PC-9 (cell line): ENCODE measurements at regions of chr4 and their contacts with region 1.

Region 1: GRCh38 chr4:147480891-147481576 is at the start of gene EDNRA:
- DNase-seq: peak in 1 of 2 experiments; percentile 16
- H3K4me3 ChIP-seq: peak within 1 kb of the TSS; percentile 46
- H3K27ac ChIP-seq: no peak within 1 kb of the TSS
- H3K4me1 ChIP-seq: no peaks in the 10 kb centered on the region
- H3K27me3 ChIP-seq: no peaks in the 10 kb centered on the region
- CTCF ChIP-seq: no peak
- total RNA-seq, gene EDNRA: not detected in 2 replicates

Region 2: GRCh38 chr4:147173797-147174432 is 307.1 kb before region 1 on chr4:
- CTCF ChIA-PET with region 1: no interaction called
- POLR2A ChIA-PET with region 1: no interaction called
- intact Hi-C with region 1: no loop called
- DNase-seq: no peak
- H3K4me3 ChIP-seq: no peak overlapping the region
- H3K27ac ChIP-seq: no peak overlapping the region
- H3K4me1 ChIP-seq: no peaks in the 10 kb centered on the region
- H3K27me3 ChIP-seq: no peaks in the 10 kb centered on the region
- CTCF ChIP-seq: no peak

Region 3: DNA sequence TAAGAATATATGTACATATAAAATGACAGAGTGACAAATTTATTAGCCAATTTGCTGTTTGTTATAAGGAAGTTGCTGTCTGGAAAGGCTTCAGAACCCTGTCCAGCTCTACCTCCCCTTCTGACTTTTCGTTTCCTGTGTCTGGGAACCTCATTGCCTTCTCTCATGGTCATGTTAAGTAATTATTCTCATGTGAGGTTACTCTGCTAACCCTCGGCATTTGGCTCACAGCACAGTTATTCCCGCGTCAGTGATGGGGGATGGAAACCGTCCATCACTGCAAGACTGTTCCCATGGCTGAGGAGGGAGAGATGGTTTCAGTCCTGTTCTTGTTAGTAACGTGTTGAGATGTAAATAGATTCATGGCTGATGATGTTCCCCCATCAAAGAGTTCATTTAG is 11.7 kb after region 1 on chr4:
- CTCF ChIA-PET with region 1: interaction called, 10 read pairs
- POLR2A ChIA-PET with region 1: no interaction called
- intact Hi-C with region 1: no loop called
- DNase-seq: no peak
- H3K4me3 ChIP-seq: no peak overlapping the region
- H3K27ac ChIP-seq: no peak overlapping the region
- H3K4me1 ChIP-seq: 0 out of 2 replicates have a peak, but pooled peaks cover under 1% of the 10 kb centered on the region
- H3K27me3 ChIP-seq: no peaks in the 10 kb centered on the region
- CTCF ChIP-seq: no peak